CD4-positive, alpha-beta memory T cell (primary cell): ENCODE measurements at regions of chr14 and their contacts with region 1.

Region 1: GRCh38 chr14:23057757-23058653 is 685 bp upstream of the CDH24 start:
- DNase-seq: peak; percentile 80 to 84 (median 82)
- H3K4me3 ChIP-seq: peak overlapping the region; percentile 36 to 89
- H3K4me3 Mint-ChIP-seq: peak overlapping the region; percentile 84 to 91 (median 88)
- H3K27ac ChIP-seq: peak overlapping the region; percentile 36
- H3K27ac Mint-ChIP-seq: peak overlapping the region in 6 of 7 donors; percentile 60 to 83 (median 82)
- H3K4me1 ChIP-seq: peaks cover 17% of the 10 kb centered on the region
- H3K4me1 Mint-ChIP-seq: peaks cover 11 to 21% (median 15%) of the 10 kb centered on the region in 4 donors
- H3K27me3 ChIP-seq: no peaks in the 10 kb centered on the region
- H3K27me3 Mint-ChIP-seq: peaks cover 0 to 1% of the 10 kb centered on the region in 2 donors

Region 2: DNA sequence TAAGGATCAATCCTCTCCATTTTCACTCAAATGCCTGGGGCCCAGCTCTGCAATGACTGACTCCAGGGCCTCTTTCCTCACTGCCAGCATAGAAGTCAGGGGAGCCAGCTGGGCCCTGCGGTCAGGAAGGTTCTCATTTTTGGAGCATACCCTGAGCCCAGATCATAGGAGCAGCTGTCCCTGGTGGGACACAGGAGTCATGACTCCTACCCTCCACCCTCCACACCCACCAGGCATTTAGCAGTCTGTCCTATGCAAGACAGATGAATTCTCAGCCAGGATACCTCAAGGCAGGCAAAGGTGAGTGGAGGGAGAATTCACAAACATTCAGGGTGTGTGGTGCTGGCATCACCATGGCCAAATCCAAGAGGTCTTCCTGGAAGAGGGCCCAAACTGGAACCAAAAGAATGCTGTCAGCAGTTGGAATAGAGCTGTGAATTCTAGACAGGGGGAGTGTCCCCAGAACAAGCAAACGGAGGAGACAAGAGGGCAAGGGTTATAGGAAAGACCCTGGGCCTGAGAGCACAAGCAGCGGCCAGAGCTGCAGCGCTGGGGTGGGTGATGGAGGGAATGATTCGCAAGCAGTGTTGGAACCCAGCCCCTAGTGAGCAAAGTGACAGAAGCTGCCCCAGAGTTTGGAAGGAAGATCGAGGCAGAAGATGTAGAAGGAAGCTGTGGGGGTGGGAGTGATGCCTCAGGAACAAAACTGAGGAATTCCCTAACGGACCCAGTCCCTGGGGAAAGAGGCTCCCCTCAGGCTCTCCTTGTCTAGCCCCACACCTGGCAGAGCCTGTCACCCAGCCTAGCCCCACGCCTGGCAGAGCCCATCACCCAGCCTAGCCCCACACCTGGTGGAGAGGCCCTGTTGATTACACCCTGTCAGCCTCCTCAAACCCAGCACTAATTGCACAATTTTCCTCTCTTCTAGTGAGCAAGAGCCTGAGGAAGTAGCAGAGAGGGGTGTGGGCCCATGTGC is 179.4 kb before region 1 on chr14:
- CTCF ChIA-PET with region 1: no interaction called
- POLR2A ChIA-PET with region 1: no interaction called
- intact Hi-C with region 1: no loop called
- DNase-seq: no peak
- H3K4me3 ChIP-seq: no peak overlapping the region
- H3K4me3 Mint-ChIP-seq: peak overlapping the region in 2 of 8 donors; percentile 3 to 30
- H3K27ac ChIP-seq: no peak overlapping the region
- H3K27ac Mint-ChIP-seq: peak overlapping the region in 4 of 7 donors; percentile 57 to 86 (median 78)
- H3K4me1 ChIP-seq: peaks cover 34% of the 10 kb centered on the region
- H3K4me1 Mint-ChIP-seq: peaks cover 16 to 46% (median 24%) of the 10 kb centered on the region in 4 donors
- H3K27me3 ChIP-seq: no peaks in the 10 kb centered on the region
- H3K27me3 Mint-ChIP-seq: no peaks in the 10 kb centered on the region

Region 3: DNA sequence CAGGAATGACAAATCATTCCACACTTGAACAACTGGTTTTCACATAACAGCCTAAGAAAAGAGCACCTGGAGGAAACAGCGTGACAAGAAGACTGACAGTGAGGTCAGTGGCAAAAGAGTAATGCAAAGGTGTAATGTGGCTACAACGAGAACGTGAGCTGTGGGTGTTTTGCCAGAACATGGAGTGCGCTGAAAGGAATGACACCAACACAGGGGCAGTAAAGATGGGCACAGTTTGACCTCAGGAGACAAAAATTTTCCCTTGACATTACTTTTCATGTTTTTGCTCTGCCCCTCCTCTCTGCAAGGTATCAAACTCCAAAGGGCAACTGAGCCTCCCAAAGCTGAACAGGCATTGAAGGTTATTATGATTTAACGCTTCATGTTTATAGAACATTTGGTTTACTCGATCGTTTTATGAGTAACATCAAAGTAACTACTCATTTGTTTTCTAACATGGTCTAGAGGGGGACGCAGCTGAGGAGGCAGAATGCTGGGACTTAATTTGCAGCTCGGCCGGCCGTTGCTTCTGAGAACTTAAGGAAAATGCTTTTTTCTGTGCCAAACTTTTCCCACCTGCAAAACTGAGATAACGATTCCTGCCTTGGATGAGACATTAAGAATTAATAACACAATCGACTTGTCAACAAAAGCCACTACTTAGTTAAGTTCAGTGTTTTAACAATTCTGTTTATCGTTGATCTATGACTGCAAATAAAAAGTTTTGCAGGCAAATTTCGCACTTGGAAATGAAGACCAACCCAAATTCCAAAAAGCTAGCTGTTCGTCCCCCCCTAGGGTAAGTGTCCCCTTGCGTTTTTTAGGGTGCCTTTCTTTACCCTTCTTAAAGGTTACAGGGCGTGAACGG is 102.1 kb before region 1 on chr14:
- CTCF ChIA-PET with region 1: interaction called, 12 read pairs
- POLR2A ChIA-PET with region 1: interaction called, 4 read pairs
- intact Hi-C with region 1: no loop called
- DNase-seq: peak in 1 of 5 donors; percentile 11
- H3K4me3 ChIP-seq: peak overlapping the region; percentile 30 to 89
- H3K4me3 Mint-ChIP-seq: peak overlapping the region; percentile 91 to 94 (median 92)
- H3K27ac ChIP-seq: peak overlapping the region; percentile 79
- H3K27ac Mint-ChIP-seq: peak overlapping the region; percentile 92 to 95 (median 93)
- H3K4me1 ChIP-seq: peaks cover 16% of the 10 kb centered on the region
- H3K4me1 Mint-ChIP-seq: peaks cover 13 to 22% (median 16%) of the 10 kb centered on the region in 4 donors
- H3K27me3 ChIP-seq: no peaks in the 10 kb centered on the region
- H3K27me3 Mint-ChIP-seq: no peaks in the 10 kb centered on the region

Region 4: DNA sequence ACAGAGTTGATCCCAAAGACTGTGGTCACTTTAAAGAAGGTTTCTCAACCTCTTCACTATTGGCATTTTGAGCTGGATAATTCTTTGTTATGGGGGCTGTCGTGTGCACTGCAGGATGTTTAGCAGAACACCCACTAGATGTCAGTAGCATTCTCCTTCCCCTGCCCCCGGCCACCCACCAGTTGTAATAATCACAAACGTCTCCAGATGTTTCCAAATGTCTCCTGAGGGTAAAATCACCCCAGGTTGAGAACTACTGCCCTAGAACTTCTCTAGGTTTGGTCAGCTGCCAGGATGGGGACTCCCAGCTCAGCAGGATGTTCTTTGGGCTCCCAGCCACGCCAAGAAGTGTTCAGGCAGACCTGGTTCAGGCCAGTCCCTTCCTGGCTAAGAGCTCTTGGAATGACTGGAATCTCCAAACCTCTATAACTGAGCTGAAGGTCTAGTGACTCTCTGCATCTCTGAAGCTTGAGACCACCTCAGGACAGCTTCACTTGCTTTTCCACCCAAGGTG is 63.2 kb before region 1 on chr14:
- CTCF ChIA-PET with region 1: interaction called, 1,070 read pairs
- POLR2A ChIA-PET with region 1: interaction called, 21 read pairs
- intact Hi-C with region 1: loop called (anchors 2 kb)
- DNase-seq: peak in 1 of 5 donors; percentile 29
- H3K4me3 ChIP-seq: no peak overlapping the region
- H3K4me3 Mint-ChIP-seq: no peak overlapping the region
- H3K27ac ChIP-seq: no peak overlapping the region
- H3K27ac Mint-ChIP-seq: peak overlapping the region in 2 of 7 donors; percentile 57 to 61
- H3K4me1 ChIP-seq: no peaks in the 10 kb centered on the region
- H3K4me1 Mint-ChIP-seq: no peaks in the 10 kb centered on the region
- H3K27me3 ChIP-seq: no peaks in the 10 kb centered on the region
- H3K27me3 Mint-ChIP-seq: no peaks in the 10 kb centered on the region

Region 5: GRCh38 chr14:23068476-23069412 is 10.7 kb after region 1 on chr14:
- CTCF ChIA-PET with region 1: interaction called, 43 read pairs
- POLR2A ChIA-PET with region 1: interaction called, 16 read pairs
- intact Hi-C with region 1: loop called (anchors 1 kb)
- DNase-seq: peak; percentile 77 to 81 (median 78)
- H3K4me3 ChIP-seq: no peak overlapping the region
- H3K4me3 Mint-ChIP-seq: peak overlapping the region in 7 of 8 donors; percentile 34 to 74 (median 61)
- H3K27ac ChIP-seq: no peak overlapping the region
- H3K27ac Mint-ChIP-seq: peak overlapping the region; percentile 34 to 93 (median 87)
- H3K4me1 ChIP-seq: peaks cover 28% of the 10 kb centered on the region
- H3K4me1 Mint-ChIP-seq: peaks cover 19 to 41% (median 32%) of the 10 kb centered on the region in 4 donors
- H3K27me3 ChIP-seq: no peaks in the 10 kb centered on the region
- H3K27me3 Mint-ChIP-seq: no peaks in the 10 kb centered on the region

Region 6: DNA sequence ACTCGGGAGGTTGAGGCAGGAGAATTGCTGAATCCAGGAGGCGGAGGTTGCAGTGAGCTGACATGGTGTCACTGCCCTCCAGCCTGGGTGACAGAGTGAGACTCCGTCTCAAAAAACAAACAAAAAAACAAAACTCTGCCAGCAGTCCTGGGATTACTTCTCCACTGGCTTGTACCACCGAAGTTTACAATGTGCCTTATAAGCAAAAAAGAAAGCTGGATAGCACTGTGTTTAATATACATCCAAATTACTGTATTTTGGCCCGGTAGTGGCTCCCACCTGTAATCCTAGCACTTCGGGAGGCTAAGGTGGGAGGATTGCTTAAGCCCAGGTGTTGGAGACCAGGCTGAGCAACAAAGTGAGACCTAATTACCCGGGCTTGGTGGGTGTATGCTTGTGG is 211.2 kb after region 1 on chr14:
- CTCF ChIA-PET with region 1: no interaction called
- POLR2A ChIA-PET with region 1: no interaction called
- intact Hi-C with region 1: no loop called
- DNase-seq: no peak
- H3K4me3 ChIP-seq: no peak overlapping the region
- H3K4me3 Mint-ChIP-seq: no peak overlapping the region
- H3K27ac ChIP-seq: no peak overlapping the region
- H3K27ac Mint-ChIP-seq: no peak overlapping the region
- H3K4me1 ChIP-seq: no peaks in the 10 kb centered on the region
- H3K4me1 Mint-ChIP-seq: no peaks in the 10 kb centered on the region
- H3K27me3 ChIP-seq: no peaks in the 10 kb centered on the region
- H3K27me3 Mint-ChIP-seq: peaks cover 1 to 7% of the 10 kb centered on the region in 2 donors